ENCODE measurements at regions of chr17 and their contacts with region 1.

Region 1: DNA sequence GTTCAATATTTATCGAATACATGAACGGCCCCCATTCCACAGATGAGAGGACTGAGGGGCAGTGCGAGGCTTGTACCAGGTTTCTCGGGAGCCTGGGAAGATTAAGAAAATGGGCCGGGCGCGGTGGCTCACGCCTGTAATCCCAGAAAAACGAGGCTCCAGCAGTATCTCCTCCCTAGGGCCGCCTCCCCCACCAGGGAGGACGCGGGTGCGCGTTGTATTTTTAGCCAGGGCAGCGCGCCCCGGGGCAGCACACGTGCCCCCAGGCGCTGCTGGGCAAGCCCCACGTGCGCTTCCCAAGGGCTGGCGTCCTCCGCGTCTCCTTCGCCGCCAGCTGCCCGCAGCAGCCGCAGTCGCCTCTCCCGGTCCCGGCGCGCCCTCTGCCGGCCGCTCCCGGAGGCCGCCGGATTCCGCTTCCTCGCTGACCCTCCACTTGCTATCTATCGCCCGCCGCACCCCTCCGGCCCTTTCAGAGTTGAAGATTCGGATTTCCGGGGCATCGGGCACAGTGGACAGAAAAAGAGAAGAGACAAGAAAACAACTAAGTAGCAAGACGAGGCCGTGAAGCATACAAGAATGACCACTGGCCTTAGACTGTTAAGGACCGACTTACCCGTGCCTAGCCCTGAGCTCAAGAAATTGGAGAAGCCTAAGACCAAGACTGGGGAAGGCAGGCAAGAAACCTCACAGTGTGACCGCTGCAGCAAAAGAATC is 1.9 kb upstream of the YBX2 start:
- DNase-seq: peak; percentile 74
- ATAC-seq: peak; percentile 93
- H3K4me3 ChIP-seq: no peak overlapping the region; the same call in 1 of the 2 replicates
- H3K27ac ChIP-seq: no peak overlapping the region
- H3K4me1 ChIP-seq: peaks cover 3% of the 10 kb centered on the region
- H3K27me3 ChIP-seq: peaks cover 44% of the 10 kb centered on the region
- CTCF ChIP-seq: peak; percentile 94
- POLR2A ChIP-seq: 0 out of 2 replicates have a peak, but pooled peaks have one; percentile 39
- RAD21 ChIP-seq: peak; percentile 95

Region 2: GRCh38 chr17:5563456-5563855 is 1732.9 kb before region 1 on chr17:
- CTCF ChIA-PET with region 1: no interaction called
- POLR2A ChIA-PET with region 1: no interaction called
- dilution Hi-C with region 1: no loop called
- in situ Hi-C with region 1: no loop called
- intact Hi-C with region 1: no loop called
- DNase-seq: peak; percentile 62
- ATAC-seq: peak; percentile 37; the same call in 1 of the 2 replicates
- H3K4me3 ChIP-seq: no peak overlapping the region
- H3K27ac ChIP-seq: no peak overlapping the region
- H3K4me1 ChIP-seq: no peaks in the 10 kb centered on the region
- H3K27me3 ChIP-seq: no peaks in the 10 kb centered on the region
- CTCF ChIP-seq: no peak
- POLR2A ChIP-seq: no peak
- RAD21 ChIP-seq: no peak

Region 3: GRCh38 chr17:7239091-7240027 is 57.0 kb before region 1 on chr17 and contains the start of gene PHF23:
- CTCF ChIA-PET with region 1: no interaction called
- POLR2A ChIA-PET with region 1: no interaction called
- dilution Hi-C with region 1: no loop called
- in situ Hi-C with region 1: no loop called
- intact Hi-C with region 1: loop called (anchors 5 kb)
- DNase-seq: peak; percentile 99
- ATAC-seq: peak; percentile 70
- H3K4me3 ChIP-seq: peak within 1 kb of the TSS; percentile 98
- H3K27ac ChIP-seq: peak within 1 kb of the TSS; percentile 97
- H3K4me1 ChIP-seq: peaks cover 14% of the 10 kb centered on the region
- H3K27me3 ChIP-seq: no peaks in the 10 kb centered on the region
- CTCF ChIP-seq: no peak
- POLR2A ChIP-seq: no peak
- RAD21 ChIP-seq: no peak
- total RNA-seq, gene PHF23: 44.8 and 45.5 TPM in 2 replicates

Measured in IMR-90 (cell line).